ENCODE measurements at regions of chr7 and their contacts with region 1.

Region 1: DNA sequence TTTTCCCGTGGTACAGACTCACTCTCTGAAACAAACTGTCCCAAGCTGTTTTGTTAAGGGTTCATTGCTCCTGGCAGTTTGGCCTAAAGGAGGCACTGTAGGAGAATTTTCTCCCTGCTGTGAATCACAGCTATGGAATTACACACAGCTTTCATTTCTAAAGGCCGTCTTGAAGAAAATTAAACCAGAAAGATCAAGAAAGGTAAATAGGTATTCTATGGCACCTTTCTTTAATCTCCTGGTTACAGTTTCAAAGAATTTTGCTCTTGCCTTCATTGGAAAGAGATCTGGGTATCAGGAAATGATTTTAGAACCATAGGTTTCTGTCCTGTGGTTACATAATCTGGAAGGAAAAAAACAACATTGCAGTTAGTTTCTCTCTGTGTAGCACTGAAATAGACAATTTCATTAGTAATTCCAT is 51.2 kb downstream of the PDK4 start:
- DNase-seq: peak; percentile 44 to 57
- H3K4me3 ChIP-seq: peak overlapping the region; percentile 47; the same call in 1 of the 2 replicates
- H3K27ac ChIP-seq: peak overlapping the region; percentile 56
- H3K4me1 ChIP-seq: peaks cover 13% of the 10 kb centered on the region
- H3K27me3 ChIP-seq: no peaks in the 10 kb centered on the region
- CTCF ChIP-seq: peak; percentile 71

Region 2: GRCh38 chr7:95318501-95319100 is 226.5 kb before region 1 on chr7:
- CTCF ChIA-PET with region 1: interaction called, 10 read pairs
- POLR2A ChIA-PET with region 1: no interaction called
- intact Hi-C with region 1: no loop called
- DNase-seq: no peak
- H3K4me3 ChIP-seq: no peak overlapping the region
- H3K27ac ChIP-seq: no peak overlapping the region
- H3K4me1 ChIP-seq: no peaks in the 10 kb centered on the region
- H3K27me3 ChIP-seq: no peaks in the 10 kb centered on the region
- CTCF ChIP-seq: no peak

Region 3: DNA sequence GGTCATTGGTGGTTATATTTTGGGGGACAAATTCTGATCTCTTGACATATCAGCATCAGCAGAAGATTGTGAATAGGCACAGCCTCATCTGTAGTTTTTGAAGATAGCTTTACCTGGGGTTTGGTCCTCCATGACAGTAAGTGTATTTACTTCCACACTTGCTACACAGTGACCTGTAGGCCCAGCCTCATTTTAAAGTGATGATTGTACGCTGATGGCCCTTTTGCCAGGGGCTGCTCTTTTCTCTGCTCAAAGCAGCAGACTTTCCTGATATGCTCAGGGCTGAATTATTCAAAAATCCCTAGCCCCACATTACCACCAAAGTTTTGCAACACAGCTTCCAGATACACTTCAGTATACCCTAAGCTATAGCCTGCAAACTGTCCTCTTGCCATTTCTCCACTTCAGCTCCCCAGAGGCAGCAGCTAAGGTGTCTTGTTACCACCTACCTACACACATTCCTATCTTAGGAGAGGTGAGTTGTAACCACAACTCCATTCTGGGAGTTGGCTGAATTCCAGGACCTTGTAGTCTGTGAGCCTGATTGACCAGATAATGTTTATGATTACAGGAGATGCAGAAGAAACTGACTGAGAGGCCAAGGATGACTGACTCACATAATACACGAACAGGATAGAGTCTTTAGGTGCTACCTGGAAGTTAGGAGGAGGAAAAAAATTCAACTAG is 53.3 kb before region 1 on chr7:
- CTCF ChIA-PET with region 1: no interaction called
- POLR2A ChIA-PET with region 1: no interaction called
- intact Hi-C with region 1: loop called (anchors 2 kb)
- DNase-seq: peak; percentile 87 to 95
- H3K4me3 ChIP-seq: no peak overlapping the region
- H3K27ac ChIP-seq: no peak overlapping the region
- H3K4me1 ChIP-seq: peaks cover 28% of the 10 kb centered on the region
- H3K27me3 ChIP-seq: no peaks in the 10 kb centered on the region
- CTCF ChIP-seq: no peak

Region 4: GRCh38 chr7:95527033-95527775 is 17.9 kb before region 1 on chr7:
- CTCF ChIA-PET with region 1: interaction called, 3 read pairs
- POLR2A ChIA-PET with region 1: interaction called, 20 read pairs
- intact Hi-C with region 1: no loop called
- DNase-seq: peak; percentile 42 to 47
- H3K4me3 ChIP-seq: no peak overlapping the region
- H3K27ac ChIP-seq: no peak overlapping the region
- H3K4me1 ChIP-seq: peaks cover 10% of the 10 kb centered on the region; the same call in 1 of the 2 replicates
- H3K27me3 ChIP-seq: no peaks in the 10 kb centered on the region
- CTCF ChIP-seq: peak; percentile 95

Region 5: GRCh38 chr7:95596198-95597063 is 51.3 kb after region 1 on chr7 and contains the start of gene PDK4:
- CTCF ChIA-PET with region 1: no interaction called
- POLR2A ChIA-PET with region 1: interaction called, 6 read pairs
- intact Hi-C with region 1: loop called (anchors 1 kb)
- DNase-seq: peak; percentile 71 to 84
- H3K4me3 ChIP-seq: peak within 1 kb of the TSS; percentile 66
- H3K27ac ChIP-seq: peak within 1 kb of the TSS; percentile 40
- H3K4me1 ChIP-seq: peaks cover 13% of the 10 kb centered on the region
- H3K27me3 ChIP-seq: no peaks in the 10 kb centered on the region
- CTCF ChIP-seq: no peak
- total RNA-seq, gene PDK4: 2.4 and 4.8 TPM in 2 replicates

Region 6: DNA sequence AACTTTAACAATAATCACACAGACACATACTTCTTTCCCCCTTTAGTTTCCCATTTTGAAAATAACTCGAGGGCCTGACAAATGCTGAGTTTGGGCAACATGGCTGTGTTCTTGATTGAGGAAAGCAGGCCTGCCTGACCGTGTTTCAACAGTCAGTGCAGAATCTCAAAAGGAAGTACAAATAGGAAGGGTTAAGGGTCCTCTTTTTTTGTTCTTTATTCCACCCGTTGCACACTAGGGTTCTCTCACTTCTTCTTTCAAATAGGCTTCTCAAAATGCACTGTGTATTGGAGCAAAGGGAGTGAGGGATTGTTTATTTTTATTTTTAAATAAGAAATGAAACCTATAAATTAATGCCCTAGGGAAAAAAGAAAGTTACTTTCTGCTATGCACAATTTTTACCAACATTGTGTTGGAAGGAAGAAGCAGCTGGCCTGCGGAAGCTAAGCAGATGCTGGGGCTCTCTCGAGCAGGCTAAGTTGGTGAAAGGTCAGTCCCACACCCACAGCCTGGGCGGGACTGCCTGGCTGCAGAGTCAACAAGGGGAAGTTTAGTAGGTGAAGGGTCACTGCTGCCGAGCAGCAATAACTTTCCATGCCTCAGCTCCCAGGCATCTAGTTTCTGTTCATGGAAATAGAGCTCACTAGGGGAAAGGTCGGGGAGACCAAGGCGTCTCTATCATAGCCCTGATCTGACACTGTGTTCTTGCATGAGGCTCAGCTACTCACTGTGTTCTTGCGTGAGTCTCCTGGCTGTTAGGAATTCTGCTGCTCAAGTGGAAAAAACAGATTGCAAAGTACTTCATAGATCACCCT is 63.5 kb after region 1 on chr7:
- CTCF ChIA-PET with region 1: interaction called, 8 read pairs
- POLR2A ChIA-PET with region 1: interaction called, 4 read pairs
- intact Hi-C with region 1: loop called (anchors 1 kb)
- DNase-seq: peak; percentile 88 to 97
- H3K4me3 ChIP-seq: peak overlapping the region; percentile 32; the same call in 1 of the 2 replicates
- H3K27ac ChIP-seq: peak overlapping the region; percentile 91
- H3K4me1 ChIP-seq: peaks cover 36% of the 10 kb centered on the region
- H3K27me3 ChIP-seq: no peaks in the 10 kb centered on the region
- CTCF ChIP-seq: no peak

Region 7: GRCh38 chr7:95684037-95684436 is 138.9 kb after region 1 on chr7:
- CTCF ChIA-PET with region 1: interaction called, 28 read pairs
- POLR2A ChIA-PET with region 1: no interaction called
- intact Hi-C with region 1: loop called (anchors 1 kb)
- DNase-seq: peak in 1 of 2 experiments; percentile 36
- H3K4me3 ChIP-seq: no peak overlapping the region
- H3K27ac ChIP-seq: no peak overlapping the region
- H3K4me1 ChIP-seq: no peaks in the 10 kb centered on the region
- H3K27me3 ChIP-seq: no peaks in the 10 kb centered on the region
- CTCF ChIP-seq: peak; percentile 74

Measured in PC-9 (cell line).